Natural killer cell (primary cell): ENCODE measurements at regions of chr5 and their contacts with region 1.

Region 1: GRCh38 chr5:10283927-10284635 is 23.6 kb downstream of the CMBL start:
- DNase-seq: peak; percentile 71 to 84
- ATAC-seq: peak; percentile 93 to 99 (median 99)
- H3K4me3 ChIP-seq: no peak overlapping the region
- H3K4me3 Mint-ChIP-seq: no peak overlapping the region
- H3K27ac ChIP-seq: no peak overlapping the region
- H3K27ac Mint-ChIP-seq: no peak overlapping the region
- H3K4me1 ChIP-seq: no peaks in the 10 kb centered on the region
- H3K4me1 Mint-ChIP-seq: peaks cover 0 to 4% of the 10 kb centered on the region in 2 donors
- H3K27me3 ChIP-seq: no peaks in the 10 kb centered on the region
- H3K27me3 Mint-ChIP-seq: peaks cover 0 to 7% of the 10 kb centered on the region in 2 donors
- CTCF ChIP-seq: peak; percentile 92

Region 2: GRCh38 chr5:9483243-9483642 is 800.8 kb before region 1 on chr5:
- intact Hi-C with region 1: no loop called
- DNase-seq: no peak
- ATAC-seq: no peak
- H3K4me3 ChIP-seq: no peak overlapping the region
- H3K4me3 Mint-ChIP-seq: no peak overlapping the region
- H3K27ac ChIP-seq: no peak overlapping the region
- H3K27ac Mint-ChIP-seq: no peak overlapping the region
- H3K4me1 ChIP-seq: no peaks in the 10 kb centered on the region
- H3K4me1 Mint-ChIP-seq: no peaks in the 10 kb centered on the region
- H3K27me3 ChIP-seq: no peaks in the 10 kb centered on the region
- H3K27me3 Mint-ChIP-seq: no peaks in the 10 kb centered on the region
- CTCF ChIP-seq: no peak

Region 3: DNA sequence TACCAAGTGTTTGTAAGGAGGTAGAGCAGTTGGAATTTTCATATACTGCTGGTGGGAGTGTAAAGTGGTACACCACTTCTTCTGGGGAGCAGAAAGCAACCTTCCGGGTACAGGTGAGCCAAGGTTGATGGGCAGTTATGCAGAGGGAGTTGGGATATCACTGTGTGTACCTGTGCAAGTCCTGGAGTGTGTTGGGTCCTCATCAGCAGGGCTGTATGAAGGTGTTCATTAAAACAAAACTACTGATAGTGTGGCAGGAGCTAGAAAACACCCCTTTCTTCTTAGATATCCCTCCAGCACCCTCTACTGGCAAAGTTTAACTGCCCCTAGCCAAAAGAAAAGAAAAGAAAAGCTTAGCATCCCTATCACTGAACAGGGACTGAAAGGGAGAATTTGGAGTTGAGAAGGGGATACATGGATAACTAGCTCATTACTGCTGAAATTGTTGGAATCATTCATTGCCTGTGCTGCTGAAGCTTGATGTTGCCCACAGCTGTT is 80.2 kb after region 1 on chr5:
- intact Hi-C with region 1: loop called (anchors 1 kb)
- DNase-seq: peak in 1 of 2 donors; percentile 60
- ATAC-seq: peak; percentile 37 to 65 (median 50)
- H3K4me3 ChIP-seq: no peak overlapping the region
- H3K4me3 Mint-ChIP-seq: no peak overlapping the region
- H3K27ac ChIP-seq: no peak overlapping the region
- H3K27ac Mint-ChIP-seq: peak overlapping the region; percentile 25 to 65
- H3K4me1 ChIP-seq: peaks cover 8% of the 10 kb centered on the region
- H3K4me1 Mint-ChIP-seq: peaks cover 64 to 75% of the 10 kb centered on the region in 2 donors
- H3K27me3 ChIP-seq: no peaks in the 10 kb centered on the region
- H3K27me3 Mint-ChIP-seq: no peaks in the 10 kb centered on the region
- CTCF ChIP-seq: peak; percentile 24

Region 4: GRCh38 chr5:10374046-10375022 is 90.3 kb after region 1 on chr5:
- intact Hi-C with region 1: loop called (anchors 5 kb)
- DNase-seq: no peak
- ATAC-seq: peak in 1 of 3 donors; percentile 33
- H3K4me3 ChIP-seq: no peak overlapping the region
- H3K4me3 Mint-ChIP-seq: peak overlapping the region; percentile 60
- H3K27ac ChIP-seq: no peak overlapping the region
- H3K27ac Mint-ChIP-seq: peak overlapping the region; percentile 65 to 79
- H3K4me1 ChIP-seq: peaks cover 33% of the 10 kb centered on the region
- H3K4me1 Mint-ChIP-seq: peaks cover 74 to 77% of the 10 kb centered on the region in 2 donors
- H3K27me3 ChIP-seq: no peaks in the 10 kb centered on the region
- H3K27me3 Mint-ChIP-seq: no peaks in the 10 kb centered on the region
- CTCF ChIP-seq: no peak

Region 5: GRCh38 chr5:10424124-10424731 is 140.1 kb after region 1 on chr5:
- intact Hi-C with region 1: loop called (anchors 1 kb)
- DNase-seq: peak in 1 of 2 donors; percentile 51
- ATAC-seq: peak; percentile 50 to 73 (median 66)
- H3K4me3 ChIP-seq: no peak overlapping the region
- H3K4me3 Mint-ChIP-seq: no peak overlapping the region
- H3K27ac ChIP-seq: no peak overlapping the region
- H3K27ac Mint-ChIP-seq: no peak overlapping the region
- H3K4me1 ChIP-seq: no peaks in the 10 kb centered on the region
- H3K4me1 Mint-ChIP-seq: peaks cover 26% of the 10 kb centered on the region in 2 donors
- H3K27me3 ChIP-seq: no peaks in the 10 kb centered on the region
- H3K27me3 Mint-ChIP-seq: no peaks in the 10 kb centered on the region
- CTCF ChIP-seq: peak; percentile 47

Region 6: GRCh38 chr5:10628601-10629000 is 344.5 kb after region 1 on chr5:
- intact Hi-C with region 1: loop called (anchors 1 kb)
- DNase-seq: no peak
- ATAC-seq: no peak
- H3K4me3 ChIP-seq: no peak overlapping the region
- H3K4me3 Mint-ChIP-seq: no peak overlapping the region
- H3K27ac ChIP-seq: no peak overlapping the region
- H3K27ac Mint-ChIP-seq: peak overlapping the region in 1 of 2 donors; percentile 35
- H3K4me1 ChIP-seq: peaks cover 38% of the 10 kb centered on the region
- H3K4me1 Mint-ChIP-seq: peaks cover 19 to 33% of the 10 kb centered on the region in 2 donors
- H3K27me3 ChIP-seq: no peaks in the 10 kb centered on the region
- H3K27me3 Mint-ChIP-seq: peaks cover 0 to 6% of the 10 kb centered on the region in 2 donors
- CTCF ChIP-seq: no peak